A549 (cell line): ENCODE measurements at regions of chr16 and their contacts with region 1.

Region 1: DNA sequence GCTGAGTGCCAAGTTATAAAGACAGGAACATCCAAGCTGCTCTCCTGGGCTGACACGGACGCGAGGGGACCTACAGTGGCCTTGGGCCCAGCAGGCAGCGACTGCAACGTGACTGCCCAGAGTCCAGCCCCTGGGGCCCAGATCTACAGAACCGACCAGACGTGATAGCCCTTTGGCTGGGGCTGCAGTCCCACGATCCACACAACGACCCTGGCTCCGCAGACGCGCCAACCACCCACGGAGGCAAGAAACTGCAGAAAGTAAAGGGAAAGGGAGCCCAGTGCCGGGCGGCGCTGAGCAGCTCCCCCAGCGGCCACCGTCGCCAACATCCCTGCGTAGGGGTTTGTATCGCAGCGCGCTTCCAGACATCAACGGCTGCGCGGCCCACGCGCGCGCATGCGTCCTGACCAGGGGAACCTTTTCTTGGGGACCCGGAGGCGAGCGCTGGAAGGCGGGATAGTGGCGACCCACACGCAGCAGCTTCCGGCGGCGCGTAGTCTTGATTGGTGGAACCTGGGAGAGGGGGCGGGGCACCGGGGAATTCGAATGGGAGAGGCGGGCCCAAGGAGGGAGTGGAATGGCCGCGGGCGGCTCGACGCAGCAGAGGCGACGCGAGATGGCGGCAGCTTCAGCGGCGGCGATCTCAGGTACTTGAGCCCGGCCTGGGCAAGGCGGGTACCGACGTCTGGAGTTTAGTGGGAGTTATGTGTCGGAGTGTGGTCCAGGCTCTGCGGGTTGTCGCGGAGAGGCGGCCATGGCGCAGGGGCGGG is at the start of gene KIF22:
- DNase-seq: peak; percentile 99
- ATAC-seq: peak; percentile 97 to 98
- H3K4me3 ChIP-seq: peak within 1 kb of the TSS; percentile 94
- H3K27ac ChIP-seq: peak within 1 kb of the TSS; percentile 94 to 96
- H3K4me1 ChIP-seq: peaks cover 20% of the 10 kb centered on the region
- CTCF ChIP-seq: peak; percentile 60
- EP300 ChIP-seq: no peak
- POLR2A ChIP-seq: peak; percentile 51; the same call in 1 of the 2 replicates
- RAD21 ChIP-seq: peak in 1 of 2 experiments; percentile 44; a peak in 2 of 5 replicates
- polyA plus RNA-seq, gene KIF22: 64.3 and 85.9 TPM in 2 replicates

Region 2: GRCh38 chr16:29753516-29753915 is 36.9 kb before region 1 on chr16:
- CTCF ChIA-PET with region 1: interaction called, 11 read pairs
- POLR2A ChIA-PET with region 1: interaction called, 3 read pairs
- DNase-seq: no peak
- ATAC-seq: no peak
- H3K4me3 ChIP-seq: no peak overlapping the region
- H3K27ac ChIP-seq: no peak overlapping the region
- H3K4me1 ChIP-seq: peaks cover 5% of the 10 kb centered on the region; the same call in 1 of the 3 replicates
- CTCF ChIP-seq: no peak
- EP300 ChIP-seq: no peak
- POLR2A ChIP-seq: no peak
- RAD21 ChIP-seq: no peak

Region 3: DNA sequence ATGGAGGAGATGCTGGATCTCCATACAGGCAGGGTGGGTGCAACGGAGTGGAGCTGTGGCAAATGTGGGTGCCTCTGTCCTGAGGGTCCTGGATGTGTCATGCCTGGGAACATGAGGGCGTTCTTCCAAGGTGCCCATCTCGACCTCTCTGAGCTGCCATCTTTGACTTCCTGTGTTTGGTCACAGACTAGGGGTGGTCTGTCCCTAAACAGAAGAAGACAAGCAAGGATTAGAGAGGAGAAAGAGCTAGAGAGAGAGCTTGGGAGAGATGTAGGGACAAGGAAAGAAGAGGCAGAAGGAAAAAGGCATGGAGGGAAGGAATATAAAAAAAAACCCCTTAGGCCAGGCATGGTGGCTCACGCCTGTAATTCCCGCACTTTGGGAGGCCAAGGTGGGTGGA is 15.6 kb before region 1 on chr16:
- CTCF ChIA-PET with region 1: interaction called, 17 read pairs
- POLR2A ChIA-PET with region 1: no interaction called
- DNase-seq: no peak
- ATAC-seq: no peak
- H3K4me3 ChIP-seq: no peak overlapping the region
- H3K27ac ChIP-seq: no peak overlapping the region
- H3K4me1 ChIP-seq: peaks cover 7% of the 10 kb centered on the region; the same call in 2 of the 3 replicates
- CTCF ChIP-seq: no peak
- EP300 ChIP-seq: no peak
- POLR2A ChIP-seq: no peak
- RAD21 ChIP-seq: no peak

Region 4: GRCh38 chr16:29815793-29816693 is 25.7 kb after region 1 on chr16 and contains the start of gene PAGR1:
- CTCF ChIA-PET with region 1: interaction called, 12 read pairs
- POLR2A ChIA-PET with region 1: interaction called, 5 read pairs
- DNase-seq: peak; percentile 95 to 100
- ATAC-seq: peak; percentile 49 to 72
- H3K4me3 ChIP-seq: peak within 1 kb of the TSS; percentile 92
- H3K27ac ChIP-seq: peak within 1 kb of the TSS; percentile 98 to 99
- H3K4me1 ChIP-seq: peaks cover 39% of the 10 kb centered on the region
- CTCF ChIP-seq: peak; percentile 92
- EP300 ChIP-seq: no peak
- POLR2A ChIP-seq: peak; percentile 88
- RAD21 ChIP-seq: peak; percentile 51 to 68
- polyA plus RNA-seq, gene PAGR1: 18.9 and 26.7 TPM in 2 replicates

Region 5: DNA sequence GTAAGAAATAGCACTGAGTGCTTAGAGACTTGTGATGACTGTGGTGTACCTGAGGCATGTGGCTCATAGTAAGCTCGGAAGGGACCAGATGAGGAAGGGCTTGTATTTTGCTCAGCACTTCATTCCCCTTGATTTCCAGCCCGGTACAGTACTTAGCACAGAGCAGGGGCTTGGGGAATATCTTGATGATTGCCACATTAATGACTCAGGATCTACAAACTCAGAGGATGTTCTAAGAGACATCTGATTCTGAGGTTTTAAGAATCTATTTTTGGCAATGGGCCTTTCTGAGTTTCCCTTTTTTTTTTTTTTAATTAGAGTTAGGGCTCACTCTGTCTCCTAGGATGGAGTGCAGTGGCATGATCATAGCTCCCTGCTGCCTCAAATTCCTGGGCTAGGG is 119.0 kb after region 1 on chr16:
- CTCF ChIA-PET with region 1: no interaction called
- POLR2A ChIA-PET with region 1: no interaction called
- DNase-seq: no peak
- ATAC-seq: no peak
- H3K4me3 ChIP-seq: no peak overlapping the region
- H3K27ac ChIP-seq: no peak overlapping the region
- H3K4me1 ChIP-seq: no peaks in the 10 kb centered on the region
- CTCF ChIP-seq: no peak
- EP300 ChIP-seq: no peak
- POLR2A ChIP-seq: no peak
- RAD21 ChIP-seq: no peak